ENCODE measurements at regions of chr3 and their contacts with region 1.

Region 1: GRCh38 chr3:59866076-59866475 is 816.3 kb upstream of the CFAP20DC start:
- DNase-seq: no peak
- ATAC-seq: no peak
- H3K4me3 Mint-ChIP-seq: no peak overlapping the region
- H3K27ac Mint-ChIP-seq: no peak overlapping the region
- H3K4me1 Mint-ChIP-seq: peaks cover 42% of the 10 kb centered on the region
- H3K27me3 Mint-ChIP-seq: no peaks in the 10 kb centered on the region

Region 2: DNA sequence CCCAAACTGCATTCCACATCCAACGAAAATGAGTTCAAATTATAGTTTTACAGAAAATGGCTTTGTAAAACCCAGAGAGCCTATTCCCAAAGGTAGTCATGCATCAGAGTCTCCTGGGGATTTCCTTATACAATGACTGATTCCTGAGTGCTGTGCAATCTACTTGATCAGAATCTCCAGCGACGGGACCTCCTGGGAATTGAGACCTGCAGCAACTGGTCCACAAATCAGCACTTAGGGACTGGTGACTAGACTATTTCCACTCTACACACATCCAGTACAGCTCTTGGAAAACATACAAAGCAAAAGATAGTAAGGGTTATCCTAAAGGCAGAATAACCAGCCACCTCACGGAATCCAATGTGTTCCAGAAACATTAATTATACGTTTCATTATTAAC is 54.7 kb after region 1 on chr3:
- CTCF ChIA-PET with region 1: no interaction called
- POLR2A ChIA-PET with region 1: interaction called, 6 read pairs
- intact Hi-C with region 1: loop called in 1 of 2 experiments (anchors 5 kb)
- DNase-seq: no peak
- ATAC-seq: no peak
- H3K4me3 Mint-ChIP-seq: no peak overlapping the region
- H3K27ac Mint-ChIP-seq: no peak overlapping the region
- H3K4me1 Mint-ChIP-seq: peaks cover 67% of the 10 kb centered on the region
- H3K27me3 Mint-ChIP-seq: no peaks in the 10 kb centered on the region

Region 3: DNA sequence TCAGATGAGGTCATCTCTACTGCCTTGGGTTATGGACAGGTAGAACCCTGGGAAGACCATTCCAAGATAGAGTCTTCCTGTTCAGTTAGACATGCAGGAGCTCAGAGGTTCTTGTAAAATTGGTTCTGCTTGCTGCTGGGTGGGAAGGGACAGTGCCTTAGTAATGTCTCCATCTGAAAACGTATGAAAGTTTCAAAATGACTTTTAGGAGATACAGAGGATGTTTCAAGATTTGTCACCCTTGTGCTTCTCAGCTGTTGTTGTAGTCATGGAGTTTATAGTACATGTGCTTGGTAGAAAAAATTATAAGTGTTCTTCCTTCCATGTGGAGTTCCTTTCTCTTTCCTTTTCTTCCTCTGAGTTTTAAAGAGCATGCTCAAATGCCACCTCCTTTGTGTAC is 68.9 kb after region 1 on chr3:
- CTCF ChIA-PET with region 1: no interaction called
- POLR2A ChIA-PET with region 1: no interaction called
- intact Hi-C with region 1: loop called in 1 of 2 experiments (anchors 1 kb)
- DNase-seq: peak; percentile 38
- ATAC-seq: peak; percentile 96
- H3K4me3 Mint-ChIP-seq: peak overlapping the region; percentile 37
- H3K27ac Mint-ChIP-seq: peak overlapping the region; percentile 79
- H3K4me1 Mint-ChIP-seq: peaks cover 81% of the 10 kb centered on the region
- H3K27me3 Mint-ChIP-seq: no peaks in the 10 kb centered on the region

Region 4: GRCh38 chr3:60017631-60018030 is 151.6 kb after region 1 on chr3:
- CTCF ChIA-PET with region 1: no interaction called
- POLR2A ChIA-PET with region 1: no interaction called
- intact Hi-C with region 1: loop called in 1 of 2 experiments (anchors 2 kb)
- DNase-seq: peak; percentile 77
- ATAC-seq: peak; percentile 88
- H3K4me3 Mint-ChIP-seq: peak overlapping the region; percentile 38
- H3K27ac Mint-ChIP-seq: peak overlapping the region; percentile 95
- H3K4me1 Mint-ChIP-seq: peaks cover 77% of the 10 kb centered on the region
- H3K27me3 Mint-ChIP-seq: no peaks in the 10 kb centered on the region

Region 5: DNA sequence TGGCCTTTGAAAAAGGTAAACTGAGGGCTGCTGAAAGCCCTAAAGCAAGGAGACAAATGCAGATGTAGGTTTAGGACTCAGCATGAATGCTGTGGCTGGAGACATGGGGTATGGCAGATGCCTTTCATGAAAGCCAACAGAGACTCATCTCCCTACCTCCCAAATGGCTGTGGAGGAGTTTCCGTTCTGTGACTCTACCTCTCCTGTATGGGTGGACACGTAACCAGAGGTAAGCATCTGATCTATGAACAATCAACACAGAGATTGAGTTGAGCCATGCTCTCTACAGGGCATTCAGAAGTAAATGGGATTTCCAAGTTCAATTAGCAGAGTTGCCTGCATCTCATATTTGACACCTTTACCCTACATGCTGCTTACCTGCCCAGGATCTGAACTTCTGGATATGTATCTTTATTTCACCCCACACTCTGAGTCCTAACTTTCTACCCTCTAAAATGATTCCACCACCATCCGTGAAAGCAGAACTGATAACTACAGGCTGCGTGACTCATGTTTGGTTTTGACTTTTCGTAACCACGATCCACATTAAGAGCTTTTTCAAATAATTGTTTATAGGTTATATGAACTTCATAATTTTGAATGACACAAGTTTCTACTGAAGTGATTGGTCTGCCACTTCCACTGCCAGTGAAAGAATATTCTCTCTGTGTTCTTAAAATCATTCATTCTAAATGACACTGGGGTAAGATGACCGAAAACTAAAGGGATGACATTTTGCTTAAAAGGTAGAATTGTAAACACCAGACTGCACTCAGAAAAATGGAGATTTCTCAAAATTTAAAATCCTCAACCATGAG is 326.4 kb after region 1 on chr3:
- CTCF ChIA-PET with region 1: no interaction called
- POLR2A ChIA-PET with region 1: no interaction called
- intact Hi-C with region 1: loop called in 1 of 2 experiments (anchors 5 kb)
- DNase-seq: peak; percentile 61
- ATAC-seq: peak; percentile 87
- H3K4me3 Mint-ChIP-seq: no peak overlapping the region
- H3K27ac Mint-ChIP-seq: peak overlapping the region; percentile 81
- H3K4me1 Mint-ChIP-seq: peaks cover 40% of the 10 kb centered on the region
- H3K27me3 Mint-ChIP-seq: no peaks in the 10 kb centered on the region

Region 6: DNA sequence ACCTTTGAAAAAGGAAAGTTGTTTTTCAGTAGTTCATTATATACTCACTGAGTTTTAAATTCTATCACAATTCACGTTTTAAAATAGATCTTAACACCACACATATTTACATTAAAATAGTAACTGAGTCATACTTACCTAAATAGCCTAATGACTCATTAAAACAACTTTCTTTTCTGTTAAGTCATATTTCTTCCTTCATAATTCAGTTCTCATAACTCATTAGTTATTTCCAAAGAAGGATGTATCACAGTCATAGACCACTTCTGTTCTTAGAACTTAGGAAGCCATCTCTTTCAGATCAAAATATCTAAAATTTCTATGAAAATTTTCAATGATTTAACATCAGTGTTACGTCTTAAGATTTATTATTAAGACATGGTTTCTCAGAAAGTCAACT is 499.3 kb after region 1 on chr3:
- CTCF ChIA-PET with region 1: no interaction called
- POLR2A ChIA-PET with region 1: no interaction called
- intact Hi-C with region 1: loop called in 1 of 2 experiments (anchors 5 kb)
- DNase-seq: no peak
- ATAC-seq: peak; percentile 81
- H3K4me3 Mint-ChIP-seq: no peak overlapping the region
- H3K27ac Mint-ChIP-seq: no peak overlapping the region
- H3K4me1 Mint-ChIP-seq: peaks cover 28% of the 10 kb centered on the region
- H3K27me3 Mint-ChIP-seq: no peaks in the 10 kb centered on the region

Measured in activated CD4-positive, alpha-beta T cell treated with anti-CD3 and anti-CD28 coated beads for 36 hours (primary cell).